Transverse colon (tissue), 4 donors: ENCODE measurements at regions of chr1 and their contacts with region 1.

Region 1: GRCh38 chr1:181166377-181167196 is 78.1 kb downstream of the IER5 start:
- DNase-seq: peak; percentile 74
- H3K4me3 ChIP-seq: no peak overlapping the region
- H3K27ac ChIP-seq: no peak overlapping the region
- H3K4me1 ChIP-seq: peaks cover 0 to 4% (median 4%) of the 10 kb centered on the region in 4 donors
- H3K27me3 ChIP-seq: no peaks in the 10 kb centered on the region
- CTCF ChIP-seq: peak; percentile 76 to 91 (median 83)
- EP300 ChIP-seq: no peak
- POLR2A ChIP-seq: no peak

Region 2: DNA sequence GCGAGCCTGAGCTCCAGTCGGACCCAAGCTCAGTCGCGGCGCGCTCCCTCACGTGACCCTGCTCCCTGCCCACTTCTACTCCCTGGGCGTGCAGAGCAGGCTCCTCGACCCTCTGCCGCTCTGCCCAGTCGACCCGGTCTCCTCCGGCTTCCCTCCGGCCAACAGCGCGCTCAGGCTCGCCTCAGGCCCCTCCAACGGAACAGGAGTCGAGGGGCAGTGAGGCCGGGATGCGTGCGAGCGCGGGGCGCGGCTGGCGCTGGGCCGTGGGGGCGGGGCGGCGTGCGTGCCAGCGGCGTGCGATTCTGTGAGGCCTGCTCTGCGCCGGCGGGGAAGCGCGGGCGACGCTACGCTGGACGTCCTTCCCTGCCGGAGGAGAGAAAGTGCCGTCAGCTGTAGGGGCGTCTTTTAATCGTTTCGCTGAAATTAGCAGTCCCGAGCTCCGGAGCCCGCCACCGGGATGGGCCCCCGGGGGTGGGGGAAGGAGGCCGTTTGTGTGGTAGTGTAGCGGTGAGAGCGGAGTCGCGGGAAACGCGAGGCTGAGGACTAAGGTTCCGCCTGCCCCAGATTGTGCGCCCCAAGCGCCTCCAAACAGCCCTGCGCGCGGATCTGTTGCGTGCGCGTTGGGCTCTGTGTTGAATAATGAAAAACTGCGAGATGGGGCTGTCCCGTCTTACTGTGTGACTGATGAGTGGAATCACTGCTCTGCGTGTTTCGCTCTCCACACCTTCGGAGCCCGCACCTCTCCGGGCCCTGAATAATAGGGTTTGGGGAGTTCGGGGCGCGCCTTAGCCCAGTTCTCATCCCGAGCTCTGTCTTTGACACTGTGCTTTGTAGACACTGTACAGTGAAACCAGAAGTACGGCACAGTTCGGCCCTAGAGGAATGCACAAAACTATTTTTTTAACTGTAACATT is 664.0 kb before region 1 on chr1 and contains the start of gene ACBD6:
- in situ Hi-C with region 1: loop called in 3 of 4 experiments (anchors 25 kb)
- intact Hi-C with region 1: no loop called
- DNase-seq: peak; percentile 84
- H3K4me3 ChIP-seq: peak within 1 kb of the TSS; percentile 54 to 85 (median 66)
- H3K27ac ChIP-seq: peak within 1 kb of the TSS; percentile 90 to 96 (median 94)
- H3K4me1 ChIP-seq: peaks cover 5 to 28% (median 14%) of the 10 kb centered on the region in 4 donors
- H3K27me3 ChIP-seq: no peaks in the 10 kb centered on the region
- CTCF ChIP-seq: peak in 1 of 5 experiments; percentile 29
- EP300 ChIP-seq: no peak
- POLR2A ChIP-seq: peak; percentile 70
- total RNA-seq, gene ACBD6: 9.7 to 48.4 (median 38.6) TPM

Region 3: DNA sequence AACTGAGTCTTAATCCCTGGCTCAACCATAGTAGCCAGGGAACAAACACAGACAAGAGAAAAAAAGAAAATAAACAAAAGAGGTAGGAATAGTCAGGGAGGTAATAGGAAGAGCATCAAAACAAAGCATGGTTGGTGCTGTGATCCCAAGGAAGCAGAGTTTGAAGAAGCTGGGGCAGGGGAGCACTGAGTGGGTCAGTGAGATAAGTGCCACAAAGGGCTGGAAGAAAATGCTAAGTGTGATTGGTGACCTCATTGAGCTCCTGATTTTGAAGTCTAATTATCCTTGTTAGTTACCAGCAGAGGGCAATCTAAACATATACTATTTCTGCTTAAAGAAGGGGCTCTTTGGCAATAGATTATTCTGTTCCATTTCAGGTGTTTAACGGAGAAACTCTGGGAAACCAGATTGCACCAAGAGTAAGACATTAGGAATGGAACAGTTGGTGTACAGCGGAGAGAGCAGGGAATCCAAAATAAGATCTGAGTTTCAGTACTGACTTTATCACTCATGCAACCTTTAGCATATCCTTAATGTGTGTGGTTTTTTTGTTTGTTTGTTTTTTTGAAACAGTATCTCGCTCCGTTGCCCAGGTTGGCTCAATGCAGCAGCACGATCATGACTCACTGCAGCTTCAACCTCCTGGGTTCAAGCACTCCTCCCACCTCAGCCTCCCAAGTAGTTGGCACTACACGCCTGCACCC is 284.6 kb before region 1 on chr1:
- in situ Hi-C with region 1: loop called (anchors 10 to 25 kb)
- intact Hi-C with region 1: loop called (anchors 10 kb)
- DNase-seq: no peak
- H3K4me3 ChIP-seq: no peak overlapping the region
- H3K27ac ChIP-seq: no peak overlapping the region
- H3K4me1 ChIP-seq: no peaks in the 10 kb centered on the region
- H3K27me3 ChIP-seq: no peaks in the 10 kb centered on the region
- CTCF ChIP-seq: peak; percentile 25 to 41 (median 29)
- EP300 ChIP-seq: no peak
- POLR2A ChIP-seq: no peak